Common myeloid progenitor, CD34-positive (primary cell): ENCODE measurements at regions of chr3 and their contacts with region 1.

Region 1: DNA sequence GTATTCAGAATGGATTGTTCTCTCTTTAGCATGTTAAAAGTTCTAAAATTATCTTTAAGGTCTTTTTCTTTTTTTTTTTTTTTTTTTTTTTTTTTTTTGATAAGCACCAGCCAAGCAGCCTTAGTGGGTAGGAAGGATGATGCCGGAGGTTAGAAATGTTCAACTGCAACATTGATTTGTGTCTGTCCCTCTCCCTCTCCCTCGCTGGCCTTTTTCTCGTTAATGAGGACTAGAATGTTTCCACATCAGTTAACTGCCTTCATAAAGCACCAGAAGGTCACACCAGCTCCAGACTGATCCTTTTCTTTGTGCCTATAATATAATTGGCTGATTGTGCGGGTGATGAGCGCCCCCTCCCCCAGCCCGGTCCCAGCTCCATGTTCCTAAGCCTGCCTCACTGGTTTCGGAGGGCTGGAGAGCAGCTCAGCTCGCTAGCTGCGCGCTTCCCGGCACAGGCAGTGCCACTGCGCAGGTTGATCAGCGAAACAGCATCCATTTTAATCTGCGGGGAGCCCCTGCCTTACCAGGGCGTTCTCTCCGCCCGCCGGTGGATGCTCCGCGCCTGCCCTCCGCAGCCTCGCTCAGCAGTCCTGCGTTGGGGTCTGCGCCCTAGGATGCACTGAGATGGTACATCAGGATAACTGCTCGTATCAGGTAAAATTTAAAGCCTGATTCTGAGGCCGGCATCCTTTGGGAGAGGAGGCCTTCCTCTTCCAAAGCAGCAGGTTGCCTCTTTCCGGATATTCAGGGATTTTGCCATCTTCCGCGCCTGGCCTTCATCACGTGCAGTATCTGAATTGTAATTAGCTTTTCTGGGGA is 148.9 kb upstream of the IL12A start:
- DNase-seq: peak; percentile 69 to 85 (median 81)
- H3K4me3 ChIP-seq: peak within 1 kb of the TSS; percentile 28 to 91 (median 75)
- H3K27ac ChIP-seq: peak within 1 kb of the TSS; percentile 14 to 81
- H3K4me1 ChIP-seq: peaks cover 2 to 68% (median 40%) of the 10 kb centered on the region in 4 experiments
- H3K27me3 ChIP-seq: no peaks in the 10 kb centered on the region

Region 2: GRCh38 chr3:159726231-159726964 is 113.4 kb before region 1 on chr3:
- CTCF ChIA-PET with region 1: no interaction called
- POLR2A ChIA-PET with region 1: no interaction called
- DNase-seq: no peak
- H3K4me3 ChIP-seq: no peak overlapping the region
- H3K27ac ChIP-seq: no peak overlapping the region
- H3K4me1 ChIP-seq: no peaks in the 10 kb centered on the region
- H3K27me3 ChIP-seq: no peaks in the 10 kb centered on the region

Region 3: DNA sequence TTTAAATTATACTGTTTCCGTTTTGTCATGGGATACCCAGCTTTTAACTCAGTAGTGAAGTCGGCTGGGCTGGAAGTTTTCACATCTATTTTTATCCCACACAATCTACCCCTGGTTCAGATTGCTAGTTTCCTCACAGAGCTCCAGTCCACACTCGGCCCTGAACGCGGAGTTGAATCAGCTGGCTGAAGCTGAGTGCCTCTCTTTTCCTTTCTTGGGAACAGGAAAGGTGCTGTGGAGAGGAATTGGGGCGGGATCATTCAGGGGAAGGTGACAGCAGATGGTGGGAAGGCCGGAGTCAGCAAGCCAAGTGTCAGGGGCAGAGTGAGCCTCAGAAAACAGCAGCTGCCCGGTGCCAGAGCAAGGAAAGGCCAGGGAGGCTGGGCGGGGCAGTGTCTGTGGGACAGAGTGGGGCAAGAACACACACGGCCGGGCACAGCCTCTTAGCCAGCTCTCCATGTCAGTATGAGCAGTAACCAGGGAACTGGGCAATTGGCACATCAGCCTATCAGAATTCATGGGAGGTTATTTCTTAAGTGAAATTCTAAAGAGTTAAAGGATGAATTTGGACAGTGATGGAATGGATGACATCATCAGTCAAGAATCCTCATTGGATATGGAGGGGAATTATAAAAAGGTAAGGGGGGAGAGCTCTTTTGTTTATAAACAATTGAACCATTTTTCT is 13.2 kb after region 1 on chr3:
- CTCF ChIA-PET with region 1: interaction called, 243 read pairs
- POLR2A ChIA-PET with region 1: interaction called, 3 read pairs
- DNase-seq: no peak
- H3K4me3 ChIP-seq: peak overlapping the region in 6 of 7 experiments; percentile 32 to 79 (median 62)
- H3K27ac ChIP-seq: peak overlapping the region; percentile 69 to 88
- H3K4me1 ChIP-seq: peaks cover 25 to 88% (median 67%) of the 10 kb centered on the region in 4 experiments
- H3K27me3 ChIP-seq: no peaks in the 10 kb centered on the region